IMR-90 (cell line): ENCODE measurements at regions of chr7 and their contacts with region 1.

Region 1: DNA sequence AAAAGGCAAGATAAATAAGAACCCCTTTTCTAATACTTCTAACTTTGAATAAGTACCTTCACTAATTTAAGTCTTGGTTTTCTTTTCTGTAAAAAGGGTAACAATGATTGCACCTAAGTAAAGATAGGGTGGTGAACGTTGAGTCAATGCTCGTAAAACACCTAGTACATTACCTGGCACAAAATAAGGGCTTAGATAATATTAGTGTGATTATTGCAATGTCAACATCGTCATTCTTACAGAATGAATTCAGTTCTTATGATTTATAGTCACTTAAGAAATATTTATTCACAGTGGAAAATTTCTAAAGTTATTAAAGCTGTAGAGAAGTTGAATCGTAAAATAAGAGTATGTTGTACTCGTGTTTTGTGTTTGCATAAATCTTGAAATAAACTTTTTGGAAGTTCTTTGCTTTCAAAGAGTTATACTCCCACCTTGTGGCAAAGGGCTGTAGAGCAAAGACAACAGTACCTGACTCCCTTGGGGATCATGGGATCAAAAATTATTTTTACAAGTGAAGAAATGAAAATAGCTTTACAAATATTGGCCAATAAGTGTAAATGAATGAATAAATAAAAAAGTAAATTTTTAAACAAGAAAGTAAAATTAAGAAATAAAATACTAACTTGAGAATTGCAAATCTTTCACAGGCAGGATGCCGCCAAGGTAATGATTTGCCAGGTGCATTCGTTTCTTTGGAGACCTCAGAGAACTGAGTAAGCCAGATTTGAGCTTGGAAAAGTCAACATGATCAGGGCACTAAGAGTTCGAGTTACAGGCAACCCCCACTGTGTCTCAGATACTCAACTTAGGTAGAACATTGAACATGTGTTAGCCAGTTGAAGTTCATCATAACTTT is 285.8 kb upstream of the CACNA2D1 start:
- DNase-seq: peak; percentile 60
- ATAC-seq: peak; percentile 76
- H3K4me3 ChIP-seq: no peak overlapping the region
- H3K27ac ChIP-seq: no peak overlapping the region
- H3K4me1 ChIP-seq: 0 out of 2 replicates have a peak, but pooled peaks cover 2% of the 10 kb centered on the region
- H3K27me3 ChIP-seq: no peaks in the 10 kb centered on the region
- CTCF ChIP-seq: peak; percentile 86
- POLR2A ChIP-seq: no peak
- RAD21 ChIP-seq: peak; percentile 83

Region 2: DNA sequence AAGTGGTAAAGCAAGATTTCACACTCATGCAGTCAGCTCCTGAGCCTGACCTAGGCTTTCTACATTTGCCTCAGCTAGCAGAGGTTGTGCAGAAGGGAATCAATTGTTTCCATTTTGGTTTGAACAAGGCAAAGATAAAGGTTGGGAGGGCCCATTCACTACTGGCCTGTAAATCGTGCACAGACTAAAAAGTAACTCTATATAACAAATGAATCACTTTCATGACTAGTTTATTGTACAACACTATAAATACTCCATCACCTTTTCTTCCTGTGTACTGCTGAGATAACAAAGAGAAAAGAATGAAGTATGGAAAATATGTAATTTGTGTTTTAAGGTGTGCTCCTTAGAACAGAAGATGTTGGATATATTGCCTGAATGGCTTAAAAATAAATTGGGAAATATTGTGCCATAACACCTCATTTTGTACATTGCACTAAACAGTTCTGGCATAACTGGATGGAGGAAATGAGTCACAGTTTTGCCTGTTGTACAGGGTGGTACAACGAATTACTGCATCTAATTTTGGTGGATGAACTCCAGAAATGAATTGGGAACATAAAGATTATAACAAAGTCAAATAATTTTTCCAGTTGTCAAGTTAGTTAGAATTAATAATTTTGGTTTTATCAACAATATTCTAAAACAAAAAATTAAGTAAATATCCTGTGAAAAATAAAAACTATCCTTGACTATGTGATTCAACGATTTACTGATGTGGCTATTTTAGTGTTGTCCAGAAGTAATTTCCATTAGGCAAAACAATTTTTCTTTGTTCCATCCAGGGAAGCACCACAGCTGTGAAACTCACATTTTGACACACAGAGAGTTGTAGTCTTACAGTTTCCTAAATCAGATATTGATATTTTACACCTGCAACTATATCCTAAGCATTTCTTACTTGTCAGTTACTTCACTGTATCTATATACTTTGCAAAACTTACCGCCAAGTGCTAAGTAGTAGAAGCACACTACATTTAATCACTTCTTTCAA is 1828.5 kb before region 1 on chr7:
- CTCF ChIA-PET with region 1: no interaction called
- POLR2A ChIA-PET with region 1: no interaction called
- dilution Hi-C with region 1: no loop called
- in situ Hi-C with region 1: no loop called
- intact Hi-C with region 1: no loop called
- DNase-seq: peak; percentile 74
- ATAC-seq: peak; percentile 73
- H3K4me3 ChIP-seq: no peak overlapping the region
- H3K27ac ChIP-seq: no peak overlapping the region
- H3K4me1 ChIP-seq: peaks cover 9% of the 10 kb centered on the region; the same call in 1 of the 2 replicates
- H3K27me3 ChIP-seq: no peaks in the 10 kb centered on the region
- CTCF ChIP-seq: no peak
- POLR2A ChIP-seq: no peak
- RAD21 ChIP-seq: no peak

Region 3: GRCh38 chr7:81956520-81956919 is 772.9 kb before region 1 on chr7:
- CTCF ChIA-PET with region 1: no interaction called
- POLR2A ChIA-PET with region 1: no interaction called
- dilution Hi-C with region 1: no loop called
- in situ Hi-C with region 1: no loop called
- intact Hi-C with region 1: loop called (anchors 5 kb)
- DNase-seq: peak; percentile 73
- ATAC-seq: peak; percentile 85
- H3K4me3 ChIP-seq: no peak overlapping the region
- H3K27ac ChIP-seq: no peak overlapping the region
- H3K4me1 ChIP-seq: no peaks in the 10 kb centered on the region
- H3K27me3 ChIP-seq: no peaks in the 10 kb centered on the region
- CTCF ChIP-seq: peak; percentile 71
- POLR2A ChIP-seq: no peak
- RAD21 ChIP-seq: peak; percentile 81

Region 4: DNA sequence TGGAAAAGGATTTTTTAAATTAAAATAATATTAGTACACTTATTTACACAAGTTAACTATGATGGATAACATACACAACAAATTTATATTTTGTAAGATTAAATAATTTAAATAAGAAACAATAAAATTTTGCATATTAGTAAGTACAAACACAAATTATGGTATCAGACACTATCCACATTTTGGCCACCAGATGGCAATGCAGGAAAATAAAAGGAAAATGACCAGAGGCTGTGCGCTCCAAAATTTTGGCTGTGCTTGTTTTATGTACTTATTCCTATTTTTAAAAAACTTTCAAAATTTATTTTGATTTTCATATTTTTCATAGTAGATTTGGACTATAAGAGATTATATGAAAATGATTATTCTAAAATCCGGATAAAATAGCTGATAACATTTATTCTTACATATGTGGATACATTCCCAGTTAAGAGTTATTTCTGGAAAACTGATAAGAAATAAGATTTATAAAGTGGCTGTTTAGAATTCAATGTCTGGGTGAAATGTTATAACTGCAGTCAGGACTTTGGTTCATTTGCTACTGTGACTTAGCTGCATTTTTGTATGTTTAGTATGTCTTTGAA is 684.8 kb before region 1 on chr7:
- CTCF ChIA-PET with region 1: no interaction called
- POLR2A ChIA-PET with region 1: no interaction called
- dilution Hi-C with region 1: no loop called
- in situ Hi-C with region 1: loop called (anchors 5 kb)
- intact Hi-C with region 1: loop called (anchors 5 kb)
- DNase-seq: peak; percentile 58
- ATAC-seq: peak; percentile 37; the same call in 1 of the 2 replicates
- H3K4me3 ChIP-seq: no peak overlapping the region
- H3K27ac ChIP-seq: no peak overlapping the region
- H3K4me1 ChIP-seq: peaks cover 3% of the 10 kb centered on the region
- H3K27me3 ChIP-seq: no peaks in the 10 kb centered on the region
- CTCF ChIP-seq: peak; percentile 78
- POLR2A ChIP-seq: no peak
- RAD21 ChIP-seq: peak; percentile 84

Region 5: DNA sequence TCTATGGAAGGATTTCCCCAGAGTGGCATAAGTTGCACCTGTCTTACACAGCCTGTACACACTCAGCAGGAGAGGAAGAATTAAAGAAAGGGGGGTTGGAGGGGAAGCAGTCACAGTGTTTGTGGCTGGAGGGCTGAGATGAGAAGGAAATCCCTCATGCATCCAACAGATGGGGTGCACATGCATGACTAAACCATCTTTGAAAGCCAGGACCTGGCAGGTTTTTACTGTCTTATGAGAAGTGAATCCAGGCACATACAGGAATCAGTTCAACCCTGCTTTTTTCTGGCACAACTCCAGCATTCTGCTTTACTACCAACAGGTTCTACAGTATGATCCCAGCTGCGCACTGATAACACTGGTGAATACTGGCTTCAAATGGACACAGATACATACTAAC is 393.5 kb before region 1 on chr7:
- CTCF ChIA-PET with region 1: no interaction called
- POLR2A ChIA-PET with region 1: no interaction called
- dilution Hi-C with region 1: no loop called
- in situ Hi-C with region 1: no loop called
- intact Hi-C with region 1: no loop called
- DNase-seq: peak; percentile 66
- ATAC-seq: no peak; the same call in 1 of the 2 replicates
- H3K4me3 ChIP-seq: no peak overlapping the region
- H3K27ac ChIP-seq: no peak overlapping the region
- H3K4me1 ChIP-seq: peaks cover 2% of the 10 kb centered on the region; the same call in 1 of the 2 replicates
- H3K27me3 ChIP-seq: no peaks in the 10 kb centered on the region
- CTCF ChIP-seq: no peak
- POLR2A ChIP-seq: no peak
- RAD21 ChIP-seq: no peak

Region 6: DNA sequence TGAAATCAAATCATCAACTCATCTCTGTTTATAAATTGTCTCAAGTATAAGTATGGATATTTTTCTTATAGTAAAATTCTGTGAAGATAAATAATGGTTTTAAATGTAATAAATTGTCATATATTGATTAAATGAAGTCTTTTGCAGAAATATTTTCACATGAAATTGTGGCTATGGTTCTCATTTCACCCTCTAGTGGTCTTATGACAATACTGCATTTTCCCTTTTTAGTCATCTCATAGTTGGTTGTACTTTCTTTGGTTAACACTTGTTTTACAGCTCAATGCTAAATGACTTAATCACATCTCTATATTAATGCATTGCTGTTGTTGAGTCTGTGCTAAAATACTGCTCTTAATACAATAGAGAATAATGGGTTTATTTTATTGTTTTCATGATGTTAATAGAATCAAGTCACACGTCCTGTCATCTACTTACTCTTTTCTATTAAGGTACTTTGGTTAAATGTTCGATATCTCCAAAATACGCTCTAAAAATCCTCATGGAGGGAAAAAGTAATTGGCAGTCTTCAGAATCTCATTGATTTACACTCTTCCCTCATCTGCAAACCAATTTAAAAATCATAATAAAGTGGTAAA is 247.8 kb before region 1 on chr7:
- CTCF ChIA-PET with region 1: no interaction called
- POLR2A ChIA-PET with region 1: no interaction called
- dilution Hi-C with region 1: no loop called
- in situ Hi-C with region 1: no loop called
- intact Hi-C with region 1: loop called (anchors 10 kb)
- DNase-seq: peak; percentile 43
- ATAC-seq: 0 out of 2 replicates have a peak, but pooled peaks have one; percentile 40
- H3K4me3 ChIP-seq: no peak overlapping the region
- H3K27ac ChIP-seq: no peak overlapping the region
- H3K4me1 ChIP-seq: no peaks in the 10 kb centered on the region
- H3K27me3 ChIP-seq: no peaks in the 10 kb centered on the region
- CTCF ChIP-seq: peak; percentile 79
- POLR2A ChIP-seq: no peak
- RAD21 ChIP-seq: peak; percentile 74